PC-3 (cell line): ENCODE measurements at regions of chr7 and their contacts with region 1.

Region 1: DNA sequence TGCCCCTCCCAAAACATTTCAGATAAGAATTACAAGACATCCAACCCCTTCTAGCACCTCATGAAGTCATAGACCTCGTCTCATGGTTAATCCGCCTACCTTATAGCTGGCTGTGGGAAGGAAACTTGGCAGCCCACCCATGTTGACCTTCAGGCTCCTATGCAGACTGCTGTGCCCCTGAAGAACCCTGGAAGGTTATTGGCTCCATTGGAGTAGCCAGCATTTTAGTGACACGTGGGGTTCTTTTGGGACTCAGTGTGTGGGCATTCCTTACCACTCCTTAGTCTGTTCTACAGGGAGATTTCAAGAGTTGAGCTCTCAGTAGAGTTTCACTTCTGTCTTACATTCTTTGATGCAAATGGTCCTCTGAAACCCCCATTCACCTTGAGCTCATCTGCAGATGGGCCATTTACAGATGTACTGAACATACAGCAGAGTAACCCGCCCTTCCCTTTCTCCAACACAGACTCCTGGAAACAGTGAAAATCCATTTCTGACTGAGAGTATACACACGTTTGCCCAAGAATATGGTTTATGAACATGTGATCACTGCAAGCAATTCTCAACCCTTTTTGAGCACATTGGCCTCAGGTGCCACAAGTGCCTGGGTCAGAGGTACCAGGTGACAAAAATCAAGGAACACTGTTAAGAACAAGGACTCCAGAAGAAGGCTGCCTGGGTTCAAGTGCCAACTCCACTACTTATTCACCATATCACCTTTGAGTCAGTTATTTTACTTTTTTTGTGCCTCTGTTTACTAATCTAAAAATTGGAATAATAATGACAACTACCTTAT is 54.0 kb upstream of the HECW1 start:
- DNase-seq: no peak
- ATAC-seq: peak; percentile 59
- H3K4me3 ChIP-seq: peak overlapping the region; percentile 62
- H3K27ac ChIP-seq: 0 out of 2 replicates have a peak overlapping the region, but pooled peaks have one; percentile 1
- H3K4me1 ChIP-seq: peaks cover 7% of the 10 kb centered on the region; the same call in 1 of the 2 replicates
- H3K27me3 ChIP-seq: no peaks in the 10 kb centered on the region
- CTCF ChIP-seq: no peak

Region 2: GRCh38 chr7:42869131-42870020 is 189.1 kb before region 1 on chr7:
- CTCF ChIA-PET with region 1: no interaction called
- POLR2A ChIA-PET with region 1: no interaction called
- intact Hi-C with region 1: no loop called
- DNase-seq: peak; percentile 67
- ATAC-seq: peak; percentile 97
- H3K4me3 ChIP-seq: no peak overlapping the region
- H3K27ac ChIP-seq: peak overlapping the region; percentile 12
- H3K4me1 ChIP-seq: peaks cover 14% of the 10 kb centered on the region
- H3K27me3 ChIP-seq: no peaks in the 10 kb centered on the region
- CTCF ChIP-seq: no peak

Region 3: GRCh38 chr7:43018446-43018845 is 40.0 kb before region 1 on chr7:
- CTCF ChIA-PET with region 1: no interaction called
- POLR2A ChIA-PET with region 1: no interaction called
- intact Hi-C with region 1: loop called (anchors 5 kb)
- DNase-seq: peak; percentile 91
- ATAC-seq: peak; percentile 99
- H3K4me3 ChIP-seq: no peak overlapping the region
- H3K27ac ChIP-seq: peak overlapping the region; percentile 38
- H3K4me1 ChIP-seq: peaks cover 7% of the 10 kb centered on the region
- H3K27me3 ChIP-seq: no peaks in the 10 kb centered on the region
- CTCF ChIP-seq: no peak

Region 4: DNA sequence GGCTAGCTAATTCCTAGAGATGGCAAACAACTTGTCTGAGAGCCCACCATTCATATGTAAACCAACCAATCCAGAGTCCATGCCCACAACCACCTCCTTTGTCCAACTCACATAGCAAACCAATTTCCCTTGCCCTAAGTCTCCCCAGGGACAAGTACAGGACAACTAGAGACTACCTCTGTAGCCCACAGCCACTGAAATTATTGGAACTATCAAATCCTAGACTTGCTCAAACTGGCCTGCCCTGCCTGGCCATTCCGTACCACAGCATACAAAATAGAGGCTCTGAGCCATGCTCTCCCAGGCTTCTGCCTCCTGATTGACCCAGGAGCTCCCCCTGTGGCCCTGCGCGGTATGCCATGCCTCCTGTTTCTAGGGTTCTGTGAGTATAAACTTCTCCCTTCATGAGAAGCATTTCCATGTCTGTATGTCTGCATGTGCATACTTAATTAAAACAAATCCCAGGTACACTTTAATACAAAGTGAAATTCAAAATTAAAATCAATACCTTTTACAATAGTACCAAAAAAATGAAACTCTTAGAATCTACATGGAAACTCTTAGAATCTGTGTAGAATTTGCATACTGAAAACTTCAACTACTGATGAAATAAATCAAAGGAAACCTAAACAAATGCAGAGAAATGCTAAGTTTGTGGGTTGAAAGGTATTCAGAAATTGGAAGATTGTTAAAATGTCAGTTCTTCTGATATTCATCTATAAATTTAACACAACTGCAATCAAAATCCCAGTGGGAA is 50.0 kb after region 1 on chr7:
- CTCF ChIA-PET with region 1: no interaction called
- POLR2A ChIA-PET with region 1: no interaction called
- intact Hi-C with region 1: no loop called
- DNase-seq: peak; percentile 79
- ATAC-seq: peak; percentile 87
- H3K4me3 ChIP-seq: no peak overlapping the region
- H3K27ac ChIP-seq: no peak overlapping the region
- H3K4me1 ChIP-seq: no peaks in the 10 kb centered on the region
- H3K27me3 ChIP-seq: peaks cover 27% of the 10 kb centered on the region
- CTCF ChIP-seq: peak; percentile 90

Region 5: DNA sequence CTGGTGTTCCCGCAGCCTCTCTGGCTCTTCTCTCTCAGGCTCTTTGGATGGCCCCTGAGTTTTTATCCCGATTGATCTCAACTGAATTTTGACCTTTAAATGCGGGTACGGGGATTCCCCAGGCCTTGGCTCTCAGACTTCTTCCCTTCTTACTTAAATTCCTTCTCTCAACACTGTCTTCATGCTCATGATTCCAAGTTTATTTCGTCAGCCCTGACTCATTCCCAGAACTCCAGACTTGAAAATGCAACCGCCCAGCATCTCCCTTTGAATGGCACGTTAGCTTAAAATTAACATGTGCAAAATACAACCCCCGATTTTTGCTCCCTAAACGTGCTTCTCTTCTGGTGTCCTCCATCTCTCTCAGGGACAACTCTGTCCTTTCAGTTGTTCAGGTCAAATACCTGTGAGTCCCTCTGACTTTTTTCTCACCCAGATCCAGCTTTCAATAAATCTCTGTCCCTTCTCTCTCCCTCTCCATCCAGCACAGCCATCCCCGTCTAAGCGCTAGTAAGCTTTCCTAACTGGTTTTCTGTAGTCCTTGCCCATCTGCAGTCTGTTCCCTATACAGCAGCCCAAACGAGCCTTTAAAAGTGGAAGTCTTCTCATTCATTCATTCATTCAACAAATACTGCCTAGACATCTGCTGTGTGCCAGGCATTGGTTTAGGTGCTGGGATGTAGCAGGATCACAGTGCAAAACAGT is 61.1 kb after region 1 on chr7:
- CTCF ChIA-PET with region 1: no interaction called
- POLR2A ChIA-PET with region 1: no interaction called
- intact Hi-C with region 1: no loop called
- DNase-seq: no peak
- ATAC-seq: no peak
- H3K4me3 ChIP-seq: no peak overlapping the region
- H3K27ac ChIP-seq: no peak overlapping the region
- H3K4me1 ChIP-seq: no peaks in the 10 kb centered on the region
- H3K27me3 ChIP-seq: peaks cover 95% of the 10 kb centered on the region
- CTCF ChIP-seq: no peak

Region 6: DNA sequence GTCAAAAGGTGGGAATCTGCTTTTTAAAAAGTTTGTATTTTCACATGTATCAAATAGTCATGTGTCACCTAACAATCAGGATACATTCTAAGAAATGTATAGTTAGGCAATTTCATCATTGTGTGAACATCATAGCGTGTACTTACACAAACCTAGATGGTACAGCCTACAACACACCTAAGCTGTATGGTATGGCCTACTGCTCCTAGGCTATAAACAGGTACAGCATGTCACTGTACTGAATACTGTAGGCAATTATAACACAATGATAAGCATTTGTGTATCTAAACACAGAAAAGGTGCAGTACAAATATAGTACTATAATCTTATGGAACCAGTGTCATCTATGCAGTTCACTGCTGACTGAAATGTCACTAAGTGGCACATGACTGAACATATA is 653.0 kb after region 1 on chr7:
- CTCF ChIA-PET with region 1: no interaction called
- POLR2A ChIA-PET with region 1: no interaction called
- intact Hi-C with region 1: no loop called
- DNase-seq: no peak
- ATAC-seq: no peak
- H3K4me3 ChIP-seq: no peak overlapping the region
- H3K27ac ChIP-seq: no peak overlapping the region
- H3K4me1 ChIP-seq: no peaks in the 10 kb centered on the region
- H3K27me3 ChIP-seq: no peaks in the 10 kb centered on the region
- CTCF ChIP-seq: no peak